ENCODE measurements at regions of chr14 and their contacts with region 1.

Region 1: DNA sequence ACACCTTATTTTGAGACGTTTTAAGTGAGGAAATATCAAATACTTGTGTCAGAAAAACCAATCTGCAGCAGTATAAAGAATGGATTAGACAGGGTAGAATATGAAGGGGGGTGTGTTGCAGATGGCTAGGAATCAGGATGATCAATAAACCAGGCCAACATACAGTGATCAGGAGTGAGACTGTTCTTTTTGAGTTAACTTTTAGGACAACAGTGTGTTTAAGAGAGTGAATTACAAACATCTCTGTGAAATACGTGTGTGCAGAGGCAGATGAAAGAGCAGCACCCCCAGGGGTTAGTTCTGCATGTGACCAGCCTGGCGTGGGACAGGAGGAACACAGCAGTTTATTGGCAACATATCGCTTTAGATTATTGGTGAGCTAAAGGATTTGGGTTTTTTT is 10.6 kb upstream of the NRDE2 start:
- DNase-seq: no peak
- ATAC-seq: no peak
- H3K4me3 ChIP-seq: no peak overlapping the region
- H3K27ac ChIP-seq: no peak overlapping the region
- H3K4me1 ChIP-seq: no peaks in the 10 kb centered on the region
- H3K27me3 ChIP-seq: peaks cover 7% of the 10 kb centered on the region
- CTCF ChIP-seq: no peak
- POLR2A ChIP-seq: no peak
- RAD21 ChIP-seq: no peak

Region 2: DNA sequence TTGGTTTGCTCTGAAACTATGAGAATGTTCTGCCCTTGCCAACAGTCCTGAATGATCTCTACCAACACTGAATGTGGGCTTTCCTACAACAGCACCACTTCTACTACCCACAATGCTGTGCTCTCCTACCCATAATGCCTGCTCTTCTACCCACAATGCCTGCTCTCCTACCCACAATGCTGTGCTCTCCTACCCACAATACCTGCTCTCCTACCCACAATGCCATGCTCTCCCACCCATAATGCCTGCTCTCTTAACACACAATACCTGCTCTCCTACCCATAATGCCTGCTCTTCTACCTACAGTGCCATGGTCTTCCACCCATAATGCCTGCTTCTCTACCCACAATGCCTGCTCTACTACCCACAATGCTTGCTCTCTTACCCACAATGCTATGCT is 188.2 kb before region 1 on chr14:
- CTCF ChIA-PET with region 1: no interaction called
- POLR2A ChIA-PET with region 1: no interaction called
- dilution Hi-C with region 1: no loop called
- in situ Hi-C with region 1: no loop called
- intact Hi-C with region 1: no loop called
- DNase-seq: no peak
- ATAC-seq: no peak
- H3K4me3 ChIP-seq: no peak overlapping the region
- H3K27ac ChIP-seq: no peak overlapping the region
- H3K4me1 ChIP-seq: no peaks in the 10 kb centered on the region
- H3K27me3 ChIP-seq: peaks cover 12% of the 10 kb centered on the region
- CTCF ChIP-seq: no peak
- POLR2A ChIP-seq: no peak
- RAD21 ChIP-seq: no peak

Region 3: DNA sequence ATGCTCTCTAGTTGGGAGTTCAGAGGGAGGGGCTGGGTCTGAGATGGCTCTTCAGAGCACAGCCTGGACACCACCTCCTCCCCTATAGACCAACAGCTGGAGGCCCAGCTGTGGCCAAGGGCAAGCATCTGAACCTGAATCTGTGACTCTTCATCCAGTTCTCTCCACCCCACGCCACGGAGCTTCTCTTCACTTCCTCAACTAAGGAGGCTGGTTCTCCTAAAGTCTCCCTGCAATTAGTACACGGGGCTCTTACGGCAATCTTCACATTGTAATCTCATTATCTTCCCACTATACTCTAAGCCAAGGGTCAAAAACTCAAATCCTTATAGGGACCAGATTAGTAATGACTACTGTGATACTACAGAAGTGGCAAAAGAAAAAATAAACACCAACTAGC is 20.4 kb before region 1 on chr14:
- CTCF ChIA-PET with region 1: no interaction called
- POLR2A ChIA-PET with region 1: no interaction called
- dilution Hi-C with region 1: no loop called
- in situ Hi-C with region 1: no loop called
- intact Hi-C with region 1: loop called (anchors 1 kb)
- DNase-seq: no peak
- ATAC-seq: no peak
- H3K4me3 ChIP-seq: no peak overlapping the region
- H3K27ac ChIP-seq: no peak overlapping the region
- H3K4me1 ChIP-seq: no peaks in the 10 kb centered on the region
- H3K27me3 ChIP-seq: no peaks in the 10 kb centered on the region
- CTCF ChIP-seq: no peak
- POLR2A ChIP-seq: no peak
- RAD21 ChIP-seq: no peak

Region 4: DNA sequence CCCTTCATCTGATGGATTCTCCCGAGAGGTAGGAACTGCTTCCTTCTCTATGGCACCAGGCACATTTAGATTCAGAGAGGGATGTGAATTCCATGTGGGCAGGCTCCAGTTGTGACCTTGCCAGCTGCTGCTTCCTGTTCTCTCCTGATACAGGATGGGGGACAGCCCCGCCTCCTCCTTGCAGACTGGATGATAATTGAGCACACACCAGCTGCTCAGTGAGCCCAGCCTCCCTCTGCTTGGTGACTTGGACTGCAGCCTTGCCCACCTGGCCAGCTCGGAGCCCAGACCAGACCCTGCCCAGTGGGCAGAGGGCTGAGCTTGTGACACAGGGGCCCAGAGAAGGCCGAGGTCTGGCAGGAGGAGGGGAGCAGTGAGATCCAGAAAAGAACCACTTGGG is 144.7 kb after region 1 on chr14:
- CTCF ChIA-PET with region 1: no interaction called
- POLR2A ChIA-PET with region 1: no interaction called
- dilution Hi-C with region 1: no loop called
- in situ Hi-C with region 1: no loop called
- intact Hi-C with region 1: no loop called
- DNase-seq: no peak
- ATAC-seq: no peak; the same call in 1 of the 2 replicates
- H3K4me3 ChIP-seq: no peak overlapping the region
- H3K27ac ChIP-seq: no peak overlapping the region
- H3K4me1 ChIP-seq: peaks cover 2% of the 10 kb centered on the region; the same call in 1 of the 2 replicates
- H3K27me3 ChIP-seq: no peaks in the 10 kb centered on the region
- CTCF ChIP-seq: no peak
- POLR2A ChIP-seq: no peak
- RAD21 ChIP-seq: no peak

Measured in IMR-90 (cell line).